ENCODE measurements at regions of chr1 and their contacts with region 1.

Region 1: GRCh38 chr1:181142096-181142958 is 53.8 kb downstream of the IER5 start:
- DNase-seq: peak; percentile 81
- CTCF ChIP-seq: peak; percentile 98

Region 2: DNA sequence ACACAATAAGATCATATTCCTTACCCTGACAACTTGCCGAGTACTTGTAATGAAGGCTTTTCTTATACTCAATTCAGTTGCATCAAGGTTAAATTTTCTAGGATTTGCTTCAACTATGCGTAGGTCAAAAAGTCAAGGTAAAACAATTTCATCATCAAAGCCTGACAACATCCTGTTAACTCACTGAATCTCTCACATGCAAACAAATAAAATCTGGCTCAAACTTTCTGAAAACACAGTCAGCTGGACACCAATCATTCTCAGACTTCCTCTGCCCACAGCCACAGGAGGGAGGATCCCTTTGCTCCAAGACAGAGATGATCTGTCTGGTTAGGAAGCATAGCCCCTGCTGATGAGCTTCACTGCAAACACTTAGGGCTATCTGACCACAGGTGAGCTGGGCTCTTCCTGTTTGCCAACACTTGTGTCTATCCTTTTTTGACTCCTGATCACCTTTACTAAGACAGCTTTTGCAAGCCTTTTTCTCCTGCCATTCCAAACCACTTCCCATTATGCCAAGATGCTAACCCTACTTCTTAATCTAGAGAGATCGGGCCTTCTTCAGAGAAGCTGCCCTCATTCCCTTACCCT is 139.7 kb before region 1 on chr1:
- CTCF ChIA-PET with region 1: interaction called, 18 read pairs
- POLR2A ChIA-PET with region 1: no interaction called
- DNase-seq: no peak
- CTCF ChIP-seq: no peak

Region 3: GRCh38 chr1:181057079-181057478 is 85.2 kb before region 1 on chr1:
- CTCF ChIA-PET with region 1: interaction called, 24 read pairs
- POLR2A ChIA-PET with region 1: no interaction called
- DNase-seq: no peak
- CTCF ChIP-seq: no peak

Region 4: GRCh38 chr1:181088079-181089016 is 54.0 kb before region 1 on chr1 and contains the start of gene IER5:
- CTCF ChIA-PET with region 1: interaction called, 74 read pairs
- POLR2A ChIA-PET with region 1: interaction called, 38 read pairs
- DNase-seq: peak; percentile 94
- CTCF ChIP-seq: no peak

Region 5: GRCh38 chr1:181117638-181118449 is 24.5 kb before region 1 on chr1:
- CTCF ChIA-PET with region 1: interaction called, 107 read pairs
- POLR2A ChIA-PET with region 1: interaction called, 4 read pairs
- DNase-seq: no peak
- CTCF ChIP-seq: no peak

Region 6: DNA sequence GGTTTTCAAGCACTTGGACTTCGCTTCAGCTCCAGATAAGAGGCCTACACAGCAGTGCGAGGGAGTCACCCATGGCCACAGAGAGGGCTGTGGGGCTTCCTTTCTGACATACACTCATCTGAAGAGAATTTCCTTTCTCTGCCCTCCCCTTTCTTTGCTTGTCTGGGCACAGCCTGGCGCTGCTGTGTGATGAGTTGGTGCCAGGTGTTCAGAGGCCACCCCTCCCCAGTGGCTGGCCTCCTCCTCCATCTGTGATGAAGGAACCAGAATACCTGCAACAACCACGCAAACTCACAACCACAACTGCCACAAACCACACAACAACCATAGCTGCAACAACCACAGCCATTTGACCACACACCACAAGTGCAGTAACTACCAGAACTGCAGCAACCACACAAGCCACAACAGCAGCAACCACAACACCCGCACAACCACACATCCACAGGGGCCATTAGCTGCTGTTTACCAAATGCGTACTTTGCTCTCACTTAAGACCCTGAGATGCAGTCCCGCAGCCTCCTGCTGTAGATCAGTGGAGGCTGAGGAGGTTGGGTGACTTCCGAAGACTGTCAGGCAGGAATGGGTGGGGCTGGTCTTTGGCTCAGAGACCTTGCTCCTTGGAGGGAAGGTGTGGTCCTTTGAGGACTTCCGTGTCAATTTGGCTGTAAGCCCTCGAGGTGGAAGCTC is 17.3 kb after region 1 on chr1:
- CTCF ChIA-PET with region 1: interaction called, 90 read pairs
- POLR2A ChIA-PET with region 1: no interaction called
- DNase-seq: no peak
- CTCF ChIP-seq: no peak